ENCODE measurements at regions of chr13 and their contacts with region 1.

Region 1: DNA sequence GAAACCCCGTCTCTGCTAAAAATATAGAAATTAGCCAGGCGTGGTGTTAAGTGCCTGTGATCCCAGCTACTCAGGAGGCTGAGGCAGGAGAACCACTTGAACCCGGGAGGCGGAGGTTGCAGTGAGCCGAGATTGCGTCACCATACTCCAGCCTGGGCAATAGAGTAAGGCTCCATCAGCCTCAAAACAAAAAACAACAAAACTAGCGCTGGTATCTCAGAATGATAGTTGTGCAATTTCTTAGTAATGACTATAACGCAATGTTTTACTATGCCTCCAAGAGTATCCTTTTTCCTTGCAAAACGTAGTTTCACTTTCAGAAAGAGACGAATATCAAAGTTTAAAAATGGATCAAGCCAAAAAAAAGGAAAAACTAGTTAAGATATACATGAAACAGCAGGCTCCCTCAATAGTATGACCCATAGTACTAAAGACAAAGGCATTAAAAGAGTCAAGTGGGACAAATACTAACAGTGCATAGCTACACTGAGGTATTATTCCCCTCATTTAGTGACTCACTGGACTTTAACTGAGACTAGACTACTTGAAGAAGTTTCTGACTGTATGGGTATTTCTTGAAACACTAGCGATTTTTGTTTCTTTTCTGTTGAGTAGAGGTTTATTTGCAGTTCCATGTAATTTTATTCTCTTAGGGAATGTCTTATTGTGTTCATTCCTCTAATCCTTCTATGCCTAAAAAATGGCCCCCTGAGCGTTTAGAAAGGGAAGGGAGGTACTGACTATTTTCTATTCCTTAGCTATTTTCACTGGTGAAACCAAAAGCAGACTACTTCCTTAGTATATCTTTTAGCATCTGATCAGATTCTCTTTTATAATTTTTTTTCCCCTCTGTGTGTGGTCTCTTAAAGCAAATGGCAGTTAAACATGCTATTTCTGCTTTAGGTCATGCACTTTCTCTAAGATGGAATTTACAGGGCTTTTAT is 10.4 kb upstream of the ITM2B start:
- DNase-seq: no peak
- ATAC-seq: peak; percentile 17
- H3K4me3 Mint-ChIP-seq: peak overlapping the region; percentile 44
- H3K27ac Mint-ChIP-seq: peak overlapping the region; percentile 67
- H3K4me1 Mint-ChIP-seq: peaks cover 41% of the 10 kb centered on the region
- H3K27me3 Mint-ChIP-seq: peaks cover under 1% of the 10 kb centered on the region

Region 2: DNA sequence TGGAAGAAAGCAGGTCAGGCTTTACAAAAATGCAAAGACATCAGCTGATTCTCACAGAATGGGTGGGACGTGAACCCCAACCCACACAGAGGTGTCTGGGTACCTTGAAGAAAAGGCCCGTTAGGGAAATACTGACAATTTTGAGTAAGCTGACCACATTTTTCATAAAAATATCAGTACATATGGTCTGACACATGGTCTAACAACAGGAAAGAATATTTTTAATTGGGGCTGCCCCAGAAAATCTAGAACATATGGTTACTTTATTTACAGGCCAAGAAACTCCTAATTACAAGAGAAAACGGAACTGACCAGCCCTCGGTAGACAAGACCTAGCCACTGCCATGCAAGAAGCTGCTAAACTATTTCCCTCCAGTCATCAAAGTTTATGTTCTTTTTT is 38.4 kb before region 1 on chr13:
- CTCF ChIA-PET with region 1: interaction called, 19 read pairs
- POLR2A ChIA-PET with region 1: interaction called, 6 read pairs
- DNase-seq: no peak
- ATAC-seq: no peak
- H3K4me3 Mint-ChIP-seq: no peak overlapping the region
- H3K27ac Mint-ChIP-seq: peak overlapping the region; percentile 40
- H3K4me1 Mint-ChIP-seq: peaks cover 60% of the 10 kb centered on the region
- H3K27me3 Mint-ChIP-seq: no peaks in the 10 kb centered on the region

Region 3: DNA sequence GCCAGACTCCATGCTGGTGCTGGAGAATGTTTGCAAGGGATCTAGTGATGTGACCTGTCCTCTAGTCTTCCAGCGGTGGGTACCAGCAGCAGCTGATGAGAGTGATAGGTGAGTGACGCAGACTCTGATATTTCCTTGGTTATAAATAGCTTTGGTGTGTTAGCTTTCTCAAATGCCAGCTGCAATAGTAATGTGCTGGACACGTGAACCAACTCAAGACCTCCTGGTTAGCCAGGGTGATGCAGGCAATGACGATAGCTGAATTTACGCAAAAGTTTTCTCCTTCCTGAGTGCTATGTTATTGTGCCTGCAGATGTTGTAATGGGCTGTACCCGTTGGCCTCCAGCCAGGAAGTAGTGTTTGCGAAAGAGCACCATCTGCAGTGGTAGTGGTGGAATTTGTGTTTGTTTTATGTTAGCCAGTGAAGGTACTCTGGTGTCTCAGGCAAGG is 560.6 kb after region 1 on chr13:
- CTCF ChIA-PET with region 1: no interaction called
- POLR2A ChIA-PET with region 1: no interaction called
- DNase-seq: no peak
- ATAC-seq: no peak
- H3K4me3 Mint-ChIP-seq: no peak overlapping the region
- H3K27ac Mint-ChIP-seq: no peak overlapping the region
- H3K4me1 Mint-ChIP-seq: no peaks in the 10 kb centered on the region
- H3K27me3 Mint-ChIP-seq: peaks cover 12% of the 10 kb centered on the region

Region 4: DNA sequence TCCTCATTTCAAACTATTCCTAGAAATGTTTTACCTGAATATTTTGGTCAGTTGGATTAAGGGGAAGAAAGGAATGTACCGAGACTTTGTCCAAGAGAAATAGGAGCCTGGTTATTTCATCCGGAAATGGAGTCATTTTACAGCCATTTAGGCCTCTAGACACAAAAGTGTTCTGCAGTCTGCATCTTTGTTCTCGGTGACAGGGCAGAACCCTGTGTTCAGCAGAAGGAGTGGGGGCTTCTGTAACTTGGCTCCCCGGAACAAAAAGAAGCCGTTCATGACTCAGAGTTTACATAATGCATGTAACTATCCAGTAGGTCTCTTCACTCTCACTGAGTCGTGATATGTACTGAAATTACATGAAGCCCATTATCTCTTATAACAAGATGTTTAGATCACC is 731.5 kb after region 1 on chr13:
- CTCF ChIA-PET with region 1: no interaction called
- POLR2A ChIA-PET with region 1: no interaction called
- DNase-seq: no peak
- ATAC-seq: no peak
- H3K4me3 Mint-ChIP-seq: no peak overlapping the region
- H3K27ac Mint-ChIP-seq: no peak overlapping the region
- H3K4me1 Mint-ChIP-seq: no peaks in the 10 kb centered on the region
- H3K27me3 Mint-ChIP-seq: peaks cover 18% of the 10 kb centered on the region

Measured in activated CD8-positive, alpha-beta T cell treated with anti-CD3 and anti-CD28 coated beads, Interleukin-2, amount 10 ng/mL, durations not matched to agents 7 days and 5 days (primary cell).